ENCODE measurements at regions of chr16 and their contacts with region 1.

Region 1: DNA sequence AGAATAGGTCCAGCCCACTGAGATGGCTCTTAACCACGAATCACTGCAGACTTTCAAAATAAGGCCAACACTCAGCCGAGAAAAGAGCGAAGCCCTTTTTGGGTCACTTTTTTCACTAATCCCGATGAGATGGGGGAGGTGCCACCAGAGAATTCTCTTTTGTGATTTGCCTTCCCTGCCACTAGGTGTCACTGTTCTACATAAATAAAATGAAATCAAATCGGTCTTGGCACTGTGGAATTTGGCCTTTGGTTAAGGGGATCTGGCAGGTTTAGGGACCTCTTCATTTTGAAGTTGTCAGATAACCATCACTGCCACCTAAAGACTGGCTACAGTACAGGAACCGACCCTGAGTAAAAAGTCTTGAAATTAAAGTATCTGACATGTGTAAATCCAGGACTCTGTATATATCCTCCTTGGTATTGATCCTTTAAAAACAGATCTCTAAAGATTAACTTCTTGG is 147.0 kb downstream of the HS3ST4 start:
- DNase-seq: no peak
- ATAC-seq: peak in 1 of 2 donors; percentile 34

Region 2: GRCh38 chr16:25764466-25764865 is 74.3 kb before region 1 on chr16:
- intact Hi-C with region 1: no loop called
- DNase-seq: no peak
- ATAC-seq: no peak

Region 3: DNA sequence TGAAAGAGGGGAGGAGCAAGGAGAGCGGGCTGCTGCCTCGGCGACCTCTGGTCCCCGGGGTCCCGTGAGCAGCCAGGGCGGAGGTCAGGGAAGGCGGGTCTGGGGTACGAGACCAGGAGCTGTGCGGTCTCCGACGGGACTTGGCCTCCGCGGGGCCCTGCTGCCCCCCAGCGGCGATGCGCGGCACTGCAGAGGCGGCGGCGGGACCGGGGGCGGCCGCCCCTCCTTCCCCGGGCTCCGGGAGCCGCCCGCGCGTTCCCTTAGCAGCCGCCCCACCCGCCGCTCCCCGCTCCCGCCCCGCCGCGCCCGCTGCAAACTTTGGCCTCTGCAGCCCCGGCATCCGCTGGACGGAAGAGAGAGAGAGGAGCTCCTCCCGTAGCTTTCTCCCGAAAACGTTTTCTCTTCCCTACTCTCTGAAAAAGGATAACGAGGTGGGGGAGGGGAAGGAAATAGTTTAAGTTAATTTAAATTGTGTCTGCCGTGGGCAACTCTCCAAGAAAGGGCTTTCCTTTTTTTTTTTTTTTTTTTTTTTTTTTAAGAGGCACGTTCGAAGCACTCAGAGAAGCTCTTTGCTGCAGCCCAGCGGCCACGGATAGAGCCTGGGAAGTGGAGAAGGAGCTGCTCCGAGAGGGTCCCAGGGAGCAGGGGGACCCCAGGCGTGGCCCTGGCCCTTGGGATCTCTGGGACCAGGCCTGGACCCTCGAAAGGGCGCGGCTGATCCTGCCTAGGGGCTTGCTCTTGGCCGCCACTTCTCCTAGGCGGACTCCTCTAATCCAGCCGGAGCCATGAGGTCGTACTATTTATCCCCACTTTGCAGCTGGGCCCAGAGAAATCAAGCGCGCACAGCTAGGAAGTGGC is 1271.1 kb after region 1 on chr16:
- intact Hi-C with region 1: loop called in 1 of 2 experiments (anchors 5 kb)
- DNase-seq: peak; percentile 82
- ATAC-seq: peak; percentile 94 to 96

Region 4: GRCh38 chr16:27449434-27450195 is 1610.9 kb after region 1 on chr16:
- intact Hi-C with region 1: loop called in 1 of 2 experiments (anchors 10 kb)
- DNase-seq: no peak
- ATAC-seq: peak in 1 of 2 donors; percentile 64

Region 5: DNA sequence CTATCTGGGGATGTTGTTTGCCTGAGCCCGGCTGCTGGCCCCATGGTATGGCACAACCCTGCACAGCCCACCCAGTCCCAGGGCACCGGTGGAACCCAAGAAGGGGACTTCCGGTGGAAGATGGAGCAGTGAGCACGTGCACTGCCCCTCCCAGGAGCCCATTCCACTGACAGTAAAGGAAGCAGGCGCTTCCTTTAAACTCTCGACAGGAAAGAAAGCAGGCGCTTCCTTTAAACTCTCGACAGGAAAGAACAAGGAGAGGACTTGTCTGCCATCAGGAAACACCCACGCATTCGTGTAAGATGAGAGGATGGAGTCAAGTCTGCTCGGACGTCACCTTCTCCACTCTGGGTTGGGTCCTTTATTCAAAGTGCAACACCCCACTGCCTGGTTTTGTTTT is 1616.9 kb after region 1 on chr16:
- intact Hi-C with region 1: loop called (anchors 5 to 10 kb)
- DNase-seq: no peak
- ATAC-seq: no peak

Measured in left cardiac atrium (tissue), 4 donors.